Heart right ventricle (tissue), 16 donors: ENCODE measurements at regions of chr1 and their contacts with region 1.

Region 1: GRCh38 chr1:92960395-92961130 is 699 bp downstream of the DIPK1A start:
- DNase-seq: peak; percentile 28 to 68
- ATAC-seq: peak; percentile 60 to 85 (median 80)
- H3K4me3 ChIP-seq: peak overlapping the region; percentile 52 to 99 (median 88)
- H3K27ac ChIP-seq: peak overlapping the region; percentile 63 to 98 (median 97)
- H3K4me1 ChIP-seq: peaks cover 0 to 46% (median 22%) of the 10 kb centered on the region in 9 donors
- H3K27me3 ChIP-seq: peaks cover 0 to 4% (median 0%) of the 10 kb centered on the region in 7 donors
- CTCF ChIP-seq: peak; percentile 15 to 84 (median 63)

Region 2: GRCh38 chr1:92858564-92859399 is 101.8 kb before region 1 on chr1:
- intact Hi-C with region 1: loop called in 8 of 10 experiments (anchors 1 to 10 kb)
- DNase-seq: peak in 1 of 2 donors; percentile 63
- ATAC-seq: peak; percentile 63 to 89 (median 82)
- H3K4me3 ChIP-seq: peak overlapping the region in 7 of 10 donors; percentile 21 to 42 (median 38)
- H3K27ac ChIP-seq: peak overlapping the region in 1 of 10 donors; percentile 3
- H3K4me1 ChIP-seq: peaks cover 0 to 15% (median 5%) of the 10 kb centered on the region in 9 donors
- H3K27me3 ChIP-seq: no peaks in the 10 kb centered on the region
- CTCF ChIP-seq: peak; percentile 89 to 100 (median 96)